Activated CD4-positive, alpha-beta memory T cell treated with anti-CD3 and anti-CD28 coated beads, Interleukin-2, amount 10 ng/mL, durations not matched to agents 7 days and 5 days (primary cell): ENCODE measurements at regions of chr20 and their contacts with region 1.

Region 1: DNA sequence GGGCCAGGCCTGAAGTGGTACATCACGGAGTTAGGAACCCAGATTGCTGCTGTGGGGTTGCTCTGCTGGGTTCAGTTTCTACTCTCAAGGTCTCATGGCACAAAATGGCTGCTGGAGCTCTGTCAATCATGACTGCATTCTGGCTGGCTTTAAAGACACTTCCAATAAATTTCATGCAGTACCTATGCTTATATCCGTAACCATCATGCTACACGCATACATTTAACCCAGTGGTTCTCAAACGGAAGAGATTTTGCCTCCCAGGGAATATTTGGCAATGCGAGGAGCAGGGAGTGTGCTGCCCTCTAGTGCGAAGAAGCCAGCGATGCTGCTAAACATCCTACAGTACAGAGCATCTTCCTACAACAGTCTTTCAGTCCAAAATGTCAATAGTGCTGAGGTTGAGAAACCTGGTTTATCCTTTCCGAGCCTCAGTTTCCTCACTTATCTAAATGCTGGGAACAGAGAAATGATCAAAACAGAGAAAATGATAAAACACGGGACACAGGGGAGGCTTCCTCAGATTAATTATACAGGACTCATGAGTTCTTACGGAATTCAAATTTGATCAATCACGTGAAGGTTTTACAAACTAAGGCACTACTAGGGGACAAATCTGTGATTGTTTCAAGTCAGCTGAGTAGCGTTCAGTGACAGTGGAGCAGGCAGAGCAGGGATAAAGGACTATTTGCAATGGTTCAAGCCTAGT is 9.6 kb upstream of the SLC2A10 start:
- DNase-seq: no peak
- H3K4me3 Mint-ChIP-seq: no peak overlapping the region
- H3K27ac Mint-ChIP-seq: no peak overlapping the region
- H3K4me1 Mint-ChIP-seq: peaks cover 3% of the 10 kb centered on the region
- H3K27me3 Mint-ChIP-seq: peaks cover 22% of the 10 kb centered on the region

Region 2: GRCh38 chr20:46657618-46658017 is 42.2 kb before region 1 on chr20:
- CTCF ChIA-PET with region 1: no interaction called
- POLR2A ChIA-PET with region 1: no interaction called
- DNase-seq: no peak
- H3K4me3 Mint-ChIP-seq: no peak overlapping the region
- H3K27ac Mint-ChIP-seq: no peak overlapping the region
- H3K4me1 Mint-ChIP-seq: no peaks in the 10 kb centered on the region
- H3K27me3 Mint-ChIP-seq: peaks cover 26% of the 10 kb centered on the region

Region 3: GRCh38 chr20:46689082-46689754 is 10.6 kb before region 1 on chr20 and contains the start of gene TP53RK:
- CTCF ChIA-PET with region 1: interaction called, 10 read pairs
- POLR2A ChIA-PET with region 1: interaction called, 3 read pairs
- DNase-seq: peak; percentile 97
- H3K4me3 Mint-ChIP-seq: peak within 1 kb of the TSS; percentile 91
- H3K27ac Mint-ChIP-seq: peak within 1 kb of the TSS; percentile 86
- H3K4me1 Mint-ChIP-seq: peaks cover 44% of the 10 kb centered on the region
- H3K27me3 Mint-ChIP-seq: no peaks in the 10 kb centered on the region
- total RNA-seq, gene TP53RK: 18.3 to 18.8 TPM

Region 4: GRCh38 chr20:46731770-46732169 is 32.0 kb after region 1 on chr20:
- CTCF ChIA-PET with region 1: no interaction called
- POLR2A ChIA-PET with region 1: no interaction called
- DNase-seq: no peak
- H3K4me3 Mint-ChIP-seq: no peak overlapping the region
- H3K27ac Mint-ChIP-seq: no peak overlapping the region
- H3K4me1 Mint-ChIP-seq: no peaks in the 10 kb centered on the region
- H3K27me3 Mint-ChIP-seq: no peaks in the 10 kb centered on the region

Region 5: GRCh38 chr20:46835418-46835817 is 135.6 kb after region 1 on chr20:
- CTCF ChIA-PET with region 1: no interaction called
- POLR2A ChIA-PET with region 1: no interaction called
- DNase-seq: no peak
- H3K4me3 Mint-ChIP-seq: no peak overlapping the region
- H3K27ac Mint-ChIP-seq: no peak overlapping the region
- H3K4me1 Mint-ChIP-seq: no peaks in the 10 kb centered on the region
- H3K27me3 Mint-ChIP-seq: peaks cover 16% of the 10 kb centered on the region